Sciatic nerve (tissue), 2 donors: ENCODE measurements at regions of chr7 and their contacts with region 1.

Region 1: GRCh38 chr7:30983042-30983913 is 19.5 kb downstream of the GHRHR start:
- DNase-seq: peak; percentile 95
- ATAC-seq: peak; percentile 92

Region 2: DNA sequence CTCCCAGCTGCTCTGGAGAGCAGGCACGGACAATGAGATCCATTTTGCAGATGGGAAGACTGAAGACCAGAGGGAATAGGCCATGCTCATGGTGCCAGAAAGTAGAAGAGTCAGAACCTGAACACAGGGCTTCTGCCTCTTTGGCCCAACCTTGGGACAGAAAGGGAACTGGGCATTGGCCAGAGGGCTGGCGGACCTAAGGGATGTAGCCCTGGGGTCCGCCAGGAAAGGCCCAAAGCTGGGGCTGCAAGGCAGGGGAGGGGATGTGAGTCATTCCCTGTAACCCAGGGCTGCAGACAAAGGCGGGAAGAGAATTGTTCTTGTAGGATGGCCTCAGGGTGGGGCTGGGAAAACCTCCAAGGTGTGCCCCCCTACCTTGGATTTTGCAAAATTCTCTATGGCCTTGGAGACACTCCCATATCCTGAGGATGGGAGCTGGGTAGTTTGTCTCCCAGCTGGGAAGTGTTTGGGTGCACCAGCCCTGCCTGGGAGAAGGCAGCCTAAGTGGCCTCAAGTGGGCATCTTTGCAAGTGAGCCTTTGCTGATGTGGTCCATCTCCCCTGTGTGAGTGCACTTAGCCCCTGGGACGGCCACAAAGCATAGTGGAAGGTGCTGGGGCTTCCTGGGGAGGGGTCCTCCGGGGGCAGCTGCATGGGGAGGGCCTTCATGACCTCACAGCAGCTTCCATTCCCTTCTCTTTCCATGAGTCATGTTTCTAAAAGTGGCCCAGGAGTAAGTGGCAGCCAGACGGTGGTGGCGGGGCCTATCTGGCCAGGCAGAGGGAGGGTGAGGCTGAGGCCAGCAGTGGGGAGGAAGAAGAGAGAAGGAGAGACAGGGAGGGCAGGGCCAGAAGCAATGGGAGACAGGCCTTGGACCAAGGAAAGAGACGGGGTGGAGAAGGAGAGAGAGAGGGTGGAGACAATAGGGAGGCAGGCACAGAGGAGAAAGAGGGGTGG is 62.4 kb before region 1 on chr7:
- intact Hi-C with region 1: no loop called
- DNase-seq: peak; percentile 53
- ATAC-seq: peak; percentile 50

Region 3: GRCh38 chr7:31120800-31121513 is 137.7 kb after region 1 on chr7:
- intact Hi-C with region 1: loop called (anchors 2 kb)
- DNase-seq: peak; percentile 6
- ATAC-seq: no peak

Region 4: DNA sequence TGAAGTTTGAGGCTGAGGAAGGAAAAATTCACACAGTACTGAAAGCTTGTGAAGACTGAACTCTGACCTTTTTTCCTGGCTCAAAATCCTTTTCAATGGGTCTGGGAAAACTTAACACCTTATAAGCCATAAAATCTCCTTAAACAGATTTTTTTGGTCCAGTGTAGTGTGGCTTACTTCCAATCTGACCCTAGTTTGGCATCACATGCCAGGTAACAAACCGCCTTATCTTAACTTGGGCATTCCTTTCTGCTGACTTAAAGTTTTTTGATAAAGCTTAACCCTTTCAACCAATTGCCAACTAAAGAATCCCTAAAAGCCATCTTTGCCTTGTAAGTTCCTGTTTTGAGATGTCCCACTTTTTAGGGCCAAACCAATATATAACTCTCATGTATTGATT is 517.4 kb after region 1 on chr7:
- intact Hi-C with region 1: no loop called
- DNase-seq: no peak
- ATAC-seq: no peak